ENCODE measurements at regions of chr3 and their contacts with region 1.

Region 1: GRCh38 chr3:142828703-142829305 is 60.1 kb downstream of the PCOLCE2 start:
- H3K4me3 Mint-ChIP-seq: no peak overlapping the region
- H3K27ac Mint-ChIP-seq: no peak overlapping the region
- H3K4me1 Mint-ChIP-seq: no peaks in the 10 kb centered on the region
- H3K27me3 Mint-ChIP-seq: no peaks in the 10 kb centered on the region

Region 2: GRCh38 chr3:142904639-142905436 is 76.0 kb after region 1 on chr3:
- intact Hi-C with region 1: loop called (anchors 1 kb)
- H3K4me3 Mint-ChIP-seq: no peak overlapping the region
- H3K27ac Mint-ChIP-seq: peak overlapping the region; percentile 7
- H3K4me1 Mint-ChIP-seq: peaks cover 14% of the 10 kb centered on the region
- H3K27me3 Mint-ChIP-seq: no peaks in the 10 kb centered on the region

Region 3: DNA sequence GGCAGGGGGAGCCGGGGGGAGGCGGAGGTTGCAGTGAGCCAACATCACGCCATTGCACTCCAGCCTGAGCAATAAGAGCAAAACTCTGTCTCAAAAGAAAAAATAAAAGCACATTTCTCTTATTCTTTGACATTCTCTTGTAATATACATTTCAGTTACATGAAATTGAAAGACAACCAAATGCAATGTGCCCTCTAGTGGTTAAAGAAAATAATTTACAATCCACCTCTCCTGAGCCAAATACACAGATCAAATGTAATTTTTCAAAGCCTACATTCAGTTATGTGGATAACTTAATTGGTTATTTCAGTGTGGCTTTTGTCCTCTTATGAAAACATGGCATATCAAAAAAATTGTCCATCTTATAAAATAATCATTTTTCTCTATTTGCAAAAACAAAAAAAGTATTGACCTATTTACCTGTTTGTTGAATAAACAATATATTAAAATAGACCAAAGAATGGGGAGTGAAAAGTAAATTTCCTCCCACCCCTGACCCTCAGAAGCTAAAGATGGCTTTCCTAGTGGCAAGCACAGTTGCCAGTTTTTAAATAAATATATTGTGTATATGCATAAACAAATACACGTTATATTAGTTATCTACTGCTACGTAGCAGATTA is 158.4 kb after region 1 on chr3:
- intact Hi-C with region 1: loop called (anchors 2 kb)
- H3K4me3 Mint-ChIP-seq: no peak overlapping the region
- H3K27ac Mint-ChIP-seq: no peak overlapping the region
- H3K4me1 Mint-ChIP-seq: no peaks in the 10 kb centered on the region
- H3K27me3 Mint-ChIP-seq: no peaks in the 10 kb centered on the region

Region 4: DNA sequence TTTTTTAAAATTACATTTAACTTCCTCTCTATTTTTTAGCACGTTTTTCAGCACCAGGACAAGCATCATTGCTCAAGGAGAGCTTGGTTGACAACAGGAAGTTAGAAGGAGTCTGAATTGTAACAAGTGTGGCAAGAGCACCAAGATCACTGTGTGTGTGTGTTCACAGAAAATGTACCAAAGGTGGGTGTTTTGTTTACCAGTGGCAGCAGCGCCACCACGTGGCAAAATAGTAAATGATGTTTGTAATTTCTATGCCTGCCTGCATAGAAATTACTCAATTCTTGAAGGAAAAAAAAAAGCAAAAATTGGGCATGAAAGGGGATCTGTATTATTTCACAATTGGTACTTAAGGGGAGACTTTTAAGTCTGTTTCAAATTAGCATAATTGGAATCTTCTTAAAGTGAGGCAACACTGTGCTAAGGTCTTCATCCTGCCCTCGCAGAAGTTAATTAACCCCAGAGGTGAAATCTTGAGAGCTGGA is 165.2 kb after region 1 on chr3:
- intact Hi-C with region 1: loop called (anchors 1 kb)
- H3K4me3 Mint-ChIP-seq: no peak overlapping the region
- H3K27ac Mint-ChIP-seq: no peak overlapping the region
- H3K4me1 Mint-ChIP-seq: peaks cover 6% of the 10 kb centered on the region
- H3K27me3 Mint-ChIP-seq: peaks cover 2% of the 10 kb centered on the region